ENCODE measurements at regions of chr21 and their contacts with region 1.

Region 1: GRCh38 chr21:16932314-16932713 is 580.5 kb upstream of the CXADR start:
- DNase-seq: no peak
- ATAC-seq: no peak
- H3K4me3 ChIP-seq: no peak overlapping the region
- H3K27ac ChIP-seq: no peak overlapping the region
- H3K4me1 ChIP-seq: no peaks in the 10 kb centered on the region
- H3K27me3 ChIP-seq: no peaks in the 10 kb centered on the region
- CTCF ChIP-seq: no peak
- POLR2A ChIP-seq: no peak

Region 2: DNA sequence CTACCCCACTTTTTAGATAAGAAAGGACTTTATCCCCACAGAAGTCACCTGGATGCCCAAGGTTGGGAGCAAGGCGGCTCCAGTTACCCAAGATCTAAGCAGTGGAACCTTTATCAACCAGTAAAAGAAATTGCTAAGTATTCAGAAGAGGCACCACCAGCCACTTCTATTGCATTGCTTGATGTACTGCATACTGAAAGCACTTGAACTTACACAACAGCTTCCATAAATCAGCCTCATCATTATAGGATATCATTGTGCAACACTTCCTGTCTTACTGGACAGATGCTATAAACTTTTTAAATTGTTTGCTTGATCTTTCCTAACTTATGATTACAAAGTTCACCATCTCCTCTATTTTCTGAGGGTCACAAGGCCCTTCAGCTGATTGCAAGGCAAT is 62.2 kb before region 1 on chr21:
- in situ Hi-C with region 1: loop called in 1 of 4 experiments (anchors 10 kb)
- intact Hi-C with region 1: no loop called
- DNase-seq: no peak
- ATAC-seq: no peak
- H3K4me3 ChIP-seq: no peak overlapping the region
- H3K27ac ChIP-seq: no peak overlapping the region
- H3K4me1 ChIP-seq: no peaks in the 10 kb centered on the region
- H3K27me3 ChIP-seq: no peaks in the 10 kb centered on the region
- CTCF ChIP-seq: no peak
- POLR2A ChIP-seq: no peak

Region 3: GRCh38 chr21:16976193-16976592 is 43.9 kb after region 1 on chr21:
- in situ Hi-C with region 1: no loop called
- intact Hi-C with region 1: no loop called
- DNase-seq: no peak
- ATAC-seq: no peak
- H3K4me3 ChIP-seq: no peak overlapping the region
- H3K27ac ChIP-seq: no peak overlapping the region
- H3K4me1 ChIP-seq: no peaks in the 10 kb centered on the region
- H3K27me3 ChIP-seq: no peaks in the 10 kb centered on the region
- CTCF ChIP-seq: no peak
- POLR2A ChIP-seq: no peak

Region 4: GRCh38 chr21:17128132-17128719 is 195.9 kb after region 1 on chr21:
- in situ Hi-C with region 1: no loop called
- intact Hi-C with region 1: no loop called
- DNase-seq: no peak
- ATAC-seq: no peak
- H3K4me3 ChIP-seq: no peak overlapping the region
- H3K27ac ChIP-seq: no peak overlapping the region
- H3K4me1 ChIP-seq: no peaks in the 10 kb centered on the region
- H3K27me3 ChIP-seq: no peaks in the 10 kb centered on the region
- CTCF ChIP-seq: no peak
- POLR2A ChIP-seq: no peak